ENCODE measurements at regions of chr9 and their contacts with region 1.

Region 1: DNA sequence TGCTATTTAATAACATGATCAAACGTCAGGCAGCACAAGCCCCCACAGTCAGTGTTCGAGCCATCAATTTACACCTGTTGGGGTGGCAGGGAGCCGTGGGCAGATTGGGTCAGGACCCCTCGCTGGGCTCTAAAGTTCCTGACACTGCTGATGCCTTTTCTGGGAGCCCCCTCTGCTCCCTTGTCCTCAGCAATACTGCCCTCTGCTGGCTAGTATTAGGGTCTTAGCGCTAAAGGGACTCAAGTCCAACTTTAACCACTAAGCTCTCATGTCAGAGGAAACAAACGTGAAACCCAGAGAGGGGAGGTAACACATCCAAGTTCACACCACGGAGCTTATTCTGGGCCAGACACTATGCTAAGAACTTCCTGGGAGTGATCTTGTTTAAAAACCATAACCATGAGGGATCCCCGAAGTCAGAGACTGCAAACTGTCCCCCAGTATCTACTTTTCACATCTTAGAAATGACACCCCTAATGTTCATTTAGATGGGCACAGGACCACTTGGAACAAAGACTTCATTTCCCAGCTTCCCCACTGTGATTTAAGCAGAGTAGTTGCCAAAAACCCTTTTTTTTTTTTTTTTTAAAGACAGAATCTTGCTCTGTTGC is 20.4 kb downstream of the ANKS6 start:
- DNase-seq: peak; percentile 68
- H3K4me3 ChIP-seq: no peak overlapping the region
- H3K27ac ChIP-seq: no peak overlapping the region
- H3K4me1 ChIP-seq: peaks cover 10% of the 10 kb centered on the region
- H3K27me3 ChIP-seq: no peaks in the 10 kb centered on the region
- CTCF ChIP-seq: peak; percentile 77 to 83
- POLR2A ChIP-seq: no peak

Region 2: GRCh38 chr9:98207606-98208005 is 568.3 kb before region 1 on chr9:
- CTCF ChIA-PET with region 1: interaction called, 26 read pairs
- POLR2A ChIA-PET with region 1: no interaction called
- dilution Hi-C with region 1: no loop called
- intact Hi-C with region 1: loop called (anchors 1 kb)
- DNase-seq: no peak
- H3K4me3 ChIP-seq: no peak overlapping the region
- H3K27ac ChIP-seq: no peak overlapping the region
- H3K4me1 ChIP-seq: no peaks in the 10 kb centered on the region
- H3K27me3 ChIP-seq: no peaks in the 10 kb centered on the region
- CTCF ChIP-seq: no peak
- POLR2A ChIP-seq: no peak

Region 3: GRCh38 chr9:98287383-98287782 is 488.6 kb before region 1 on chr9:
- CTCF ChIA-PET with region 1: interaction called, 6 read pairs
- POLR2A ChIA-PET with region 1: no interaction called
- dilution Hi-C with region 1: loop called (anchors 25 kb)
- intact Hi-C with region 1: no loop called
- DNase-seq: no peak
- H3K4me3 ChIP-seq: no peak overlapping the region
- H3K27ac ChIP-seq: no peak overlapping the region
- H3K4me1 ChIP-seq: no peaks in the 10 kb centered on the region
- H3K27me3 ChIP-seq: no peaks in the 10 kb centered on the region
- CTCF ChIP-seq: no peak
- POLR2A ChIP-seq: no peak

Region 4: DNA sequence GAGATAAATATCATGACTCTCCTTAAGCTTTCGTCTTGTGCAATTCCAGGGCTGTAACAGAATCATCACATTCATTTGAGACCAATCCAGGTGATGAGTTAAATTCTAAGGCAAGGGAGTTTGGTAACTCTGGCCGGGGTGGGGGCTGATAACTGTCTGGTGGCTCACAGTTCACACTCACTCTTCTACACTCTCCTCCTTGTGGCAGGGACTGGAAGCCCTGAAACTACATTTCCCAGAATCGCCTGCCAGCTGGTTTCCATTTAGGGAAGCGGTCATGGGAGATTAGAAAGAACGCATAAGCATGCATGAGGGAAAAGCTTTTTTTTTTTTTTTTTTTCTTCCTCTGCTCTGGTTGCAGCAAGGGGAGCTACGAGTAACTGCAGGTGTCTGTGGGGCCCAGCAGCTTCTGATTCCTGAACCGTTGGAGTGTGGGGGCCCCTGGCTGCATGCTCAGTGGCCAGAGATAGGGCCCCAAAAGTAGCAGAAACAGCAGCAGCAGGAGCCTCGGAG is 365.7 kb before region 1 on chr9:
- CTCF ChIA-PET with region 1: interaction called, 19 read pairs
- POLR2A ChIA-PET with region 1: no interaction called
- dilution Hi-C with region 1: no loop called
- intact Hi-C with region 1: no loop called
- DNase-seq: peak; percentile 55
- H3K4me3 ChIP-seq: no peak overlapping the region
- H3K27ac ChIP-seq: no peak overlapping the region
- H3K4me1 ChIP-seq: peaks cover 13% of the 10 kb centered on the region
- H3K27me3 ChIP-seq: no peaks in the 10 kb centered on the region
- CTCF ChIP-seq: peak in 1 of 2 donors; percentile 38
- POLR2A ChIP-seq: no peak

Region 5: GRCh38 chr9:98575379-98576346 is 200.3 kb before region 1 on chr9:
- CTCF ChIA-PET with region 1: interaction called, 10 read pairs
- POLR2A ChIA-PET with region 1: no interaction called
- dilution Hi-C with region 1: no loop called
- intact Hi-C with region 1: no loop called
- DNase-seq: no peak
- H3K4me3 ChIP-seq: no peak overlapping the region
- H3K27ac ChIP-seq: no peak overlapping the region
- H3K4me1 ChIP-seq: no peaks in the 10 kb centered on the region
- H3K27me3 ChIP-seq: no peaks in the 10 kb centered on the region
- CTCF ChIP-seq: no peak
- POLR2A ChIP-seq: no peak

Region 6: GRCh38 chr9:98745470-98745869 is 30.5 kb before region 1 on chr9:
- CTCF ChIA-PET with region 1: interaction called, 10 read pairs
- POLR2A ChIA-PET with region 1: no interaction called
- dilution Hi-C with region 1: no loop called
- intact Hi-C with region 1: no loop called
- DNase-seq: no peak
- H3K4me3 ChIP-seq: no peak overlapping the region
- H3K27ac ChIP-seq: no peak overlapping the region
- H3K4me1 ChIP-seq: no peaks in the 10 kb centered on the region
- H3K27me3 ChIP-seq: no peaks in the 10 kb centered on the region
- CTCF ChIP-seq: no peak
- POLR2A ChIP-seq: no peak

Region 7: GRCh38 chr9:98848450-98849149 is 72.7 kb after region 1 on chr9:
- CTCF ChIA-PET with region 1: no interaction called
- POLR2A ChIA-PET with region 1: no interaction called
- dilution Hi-C with region 1: no loop called
- intact Hi-C with region 1: no loop called
- DNase-seq: peak; percentile 80
- H3K4me3 ChIP-seq: no peak overlapping the region
- H3K27ac ChIP-seq: no peak overlapping the region
- H3K4me1 ChIP-seq: no peaks in the 10 kb centered on the region
- H3K27me3 ChIP-seq: no peaks in the 10 kb centered on the region
- CTCF ChIP-seq: peak; percentile 93 to 94
- POLR2A ChIP-seq: no peak

Region 8: GRCh38 chr9:99039505-99040182 is 263.7 kb after region 1 on chr9:
- CTCF ChIA-PET with region 1: no interaction called
- POLR2A ChIA-PET with region 1: no interaction called
- dilution Hi-C with region 1: no loop called
- intact Hi-C with region 1: no loop called
- DNase-seq: no peak
- H3K4me3 ChIP-seq: no peak overlapping the region
- H3K27ac ChIP-seq: no peak overlapping the region
- H3K4me1 ChIP-seq: peaks cover 6% of the 10 kb centered on the region
- H3K27me3 ChIP-seq: no peaks in the 10 kb centered on the region
- CTCF ChIP-seq: no peak
- POLR2A ChIP-seq: no peak

Region 9: DNA sequence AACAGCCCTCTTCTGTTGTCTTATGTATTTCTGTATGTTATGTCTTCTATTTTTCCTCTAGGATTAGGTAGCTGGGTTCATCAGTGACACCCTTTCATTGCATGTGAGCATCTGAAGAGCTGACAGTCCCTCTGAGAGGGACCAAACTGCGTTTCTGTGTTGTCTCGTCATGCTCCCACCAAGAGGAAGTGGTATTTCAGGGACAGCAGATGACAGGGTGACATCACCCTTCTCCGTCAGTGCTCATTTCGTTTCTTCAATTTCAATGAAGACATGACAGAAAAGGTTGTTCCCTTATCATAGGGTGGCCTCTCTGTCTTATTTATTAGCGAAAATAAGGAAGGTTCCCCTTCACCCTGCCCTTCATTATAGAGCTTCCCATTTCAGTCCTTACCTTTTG is 819.9 kb after region 1 on chr9:
- CTCF ChIA-PET with region 1: no interaction called
- POLR2A ChIA-PET with region 1: no interaction called
- dilution Hi-C with region 1: no loop called
- intact Hi-C with region 1: no loop called
- DNase-seq: no peak
- H3K4me3 ChIP-seq: no peak overlapping the region
- H3K27ac ChIP-seq: no peak overlapping the region
- H3K4me1 ChIP-seq: no peaks in the 10 kb centered on the region
- H3K27me3 ChIP-seq: no peaks in the 10 kb centered on the region
- CTCF ChIP-seq: no peak
- POLR2A ChIP-seq: no peak

Measured in endothelial cell of umbilical vein (primary cell).